Activated naive CD4-positive, alpha-beta T cell treated with anti-CD3 and anti-CD28 coated beads for 36 hours (primary cell): ENCODE measurements at regions of chr12 and their contacts with region 1.

Region 1: DNA sequence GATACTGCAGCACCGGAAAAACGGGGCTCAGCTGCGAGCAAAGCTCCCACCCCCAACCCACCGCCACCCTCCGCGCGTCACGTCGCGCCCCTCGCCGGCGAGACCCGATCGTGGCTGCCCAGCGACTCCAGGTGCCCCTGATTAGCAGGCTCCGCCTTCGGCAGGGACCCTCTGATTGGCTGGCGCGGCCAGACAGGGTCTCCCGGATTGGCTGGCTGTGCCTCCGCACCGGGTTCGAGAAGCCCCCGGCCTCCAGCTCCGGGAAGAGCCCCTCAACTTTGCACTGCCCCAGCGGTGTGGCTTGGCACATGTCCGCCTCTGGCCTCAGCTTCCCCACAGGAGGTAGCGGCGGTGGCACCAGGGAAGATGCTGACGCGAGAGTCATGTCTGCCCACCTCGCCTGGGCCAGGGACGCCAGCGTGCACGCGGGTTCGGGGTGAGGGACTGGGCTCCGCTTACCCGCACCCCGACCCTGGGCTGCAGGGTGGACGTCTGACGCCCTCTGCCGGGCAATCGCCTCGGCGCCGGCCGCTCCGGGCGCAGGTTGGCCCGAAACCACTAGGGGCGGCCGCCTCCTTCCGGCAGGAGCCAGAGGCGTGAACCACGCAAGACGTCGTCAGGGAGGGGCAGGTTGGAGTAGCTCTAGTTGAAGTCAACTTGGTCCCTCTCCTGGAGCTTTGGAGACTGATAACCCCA is 498 bp upstream of the RHOF start:
- DNase-seq: peak; percentile 97
- H3K4me3 Mint-ChIP-seq: peak overlapping the region; percentile 83
- H3K27ac Mint-ChIP-seq: peak overlapping the region; percentile 92
- H3K4me1 Mint-ChIP-seq: peaks cover 64% of the 10 kb centered on the region
- H3K27me3 Mint-ChIP-seq: no peaks in the 10 kb centered on the region

Region 2: GRCh38 chr12:121399391-121400331 is 394.3 kb before region 1 on chr12 and contains the start of gene RNF34:
- CTCF ChIA-PET with region 1: no interaction called
- intact Hi-C with region 1: loop called (anchors 5 kb)
- DNase-seq: peak; percentile 99
- H3K4me3 Mint-ChIP-seq: peak within 1 kb of the TSS; percentile 87
- H3K27ac Mint-ChIP-seq: peak within 1 kb of the TSS; percentile 93
- H3K4me1 Mint-ChIP-seq: peaks cover 32% of the 10 kb centered on the region
- H3K27me3 Mint-ChIP-seq: no peaks in the 10 kb centered on the region
- total RNA-seq, gene RNF34: 54.1 to 57.0 TPM

Region 3: DNA sequence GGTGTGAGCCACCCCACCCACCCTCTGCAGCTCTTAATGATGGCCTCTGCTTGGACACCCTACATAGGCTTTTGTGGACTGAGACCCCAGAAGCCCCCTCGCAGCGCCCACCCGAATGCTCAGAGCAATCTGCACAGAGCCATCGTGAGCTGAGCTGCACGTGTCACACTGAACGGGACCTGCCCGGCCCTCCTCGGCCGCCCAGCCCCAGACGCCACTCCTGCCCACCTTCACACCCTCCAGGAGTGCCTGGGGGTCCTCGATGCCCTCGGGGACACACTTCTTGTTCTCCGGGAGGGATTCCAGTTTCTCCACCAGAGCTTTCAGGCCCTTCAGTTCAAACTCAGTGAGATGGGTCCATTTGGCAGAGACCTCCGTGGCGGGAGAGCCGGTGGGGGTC is 284.6 kb before region 1 on chr12:
- CTCF ChIA-PET with region 1: no interaction called
- intact Hi-C with region 1: no loop called
- DNase-seq: no peak
- H3K4me3 Mint-ChIP-seq: no peak overlapping the region
- H3K27ac Mint-ChIP-seq: no peak overlapping the region
- H3K4me1 Mint-ChIP-seq: peaks cover under 1% of the 10 kb centered on the region
- H3K27me3 Mint-ChIP-seq: no peaks in the 10 kb centered on the region

Region 4: DNA sequence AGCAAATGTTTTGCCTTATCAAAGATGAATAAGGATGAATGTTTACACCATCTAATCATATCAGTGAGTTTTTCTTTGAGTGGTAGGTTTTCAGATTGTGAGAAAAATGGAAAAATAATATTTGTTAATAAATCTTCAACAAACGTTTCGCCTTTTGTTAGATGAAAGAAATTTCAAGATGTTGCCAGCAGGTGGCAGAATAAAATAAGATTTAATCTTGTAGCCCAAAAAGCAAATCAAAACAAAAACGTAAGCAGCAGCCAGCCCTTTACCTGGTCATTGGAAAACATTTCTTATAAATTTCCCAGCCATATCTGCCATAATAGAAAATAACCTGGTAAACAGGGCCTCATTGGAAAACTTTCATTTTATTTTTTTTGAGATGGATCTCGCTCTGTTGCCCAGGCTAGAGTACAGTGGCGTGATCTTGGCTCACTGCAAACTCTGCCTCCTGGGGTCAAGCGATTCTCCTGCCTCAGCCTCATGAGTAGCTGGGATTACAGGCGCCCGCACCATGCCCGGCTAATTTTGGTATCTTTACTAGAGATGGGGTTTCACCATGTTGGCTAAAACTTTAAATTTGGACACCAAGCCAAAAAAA is 96.8 kb before region 1 on chr12:
- CTCF ChIA-PET with region 1: interaction called, 119 read pairs
- intact Hi-C with region 1: loop called (anchors 1 kb)
- DNase-seq: peak; percentile 38
- H3K4me3 Mint-ChIP-seq: no peak overlapping the region
- H3K27ac Mint-ChIP-seq: no peak overlapping the region
- H3K4me1 Mint-ChIP-seq: peaks cover 2% of the 10 kb centered on the region
- H3K27me3 Mint-ChIP-seq: no peaks in the 10 kb centered on the region

Region 5: GRCh38 chr12:121811434-121812319 is 17.7 kb after region 1 on chr12:
- CTCF ChIA-PET with region 1: interaction called, 494 read pairs
- intact Hi-C with region 1: loop called (anchors 1 kb)
- DNase-seq: peak; percentile 67
- H3K4me3 Mint-ChIP-seq: peak overlapping the region; percentile 78
- H3K27ac Mint-ChIP-seq: peak overlapping the region; percentile 86
- H3K4me1 Mint-ChIP-seq: peaks cover 52% of the 10 kb centered on the region
- H3K27me3 Mint-ChIP-seq: no peaks in the 10 kb centered on the region

Region 6: DNA sequence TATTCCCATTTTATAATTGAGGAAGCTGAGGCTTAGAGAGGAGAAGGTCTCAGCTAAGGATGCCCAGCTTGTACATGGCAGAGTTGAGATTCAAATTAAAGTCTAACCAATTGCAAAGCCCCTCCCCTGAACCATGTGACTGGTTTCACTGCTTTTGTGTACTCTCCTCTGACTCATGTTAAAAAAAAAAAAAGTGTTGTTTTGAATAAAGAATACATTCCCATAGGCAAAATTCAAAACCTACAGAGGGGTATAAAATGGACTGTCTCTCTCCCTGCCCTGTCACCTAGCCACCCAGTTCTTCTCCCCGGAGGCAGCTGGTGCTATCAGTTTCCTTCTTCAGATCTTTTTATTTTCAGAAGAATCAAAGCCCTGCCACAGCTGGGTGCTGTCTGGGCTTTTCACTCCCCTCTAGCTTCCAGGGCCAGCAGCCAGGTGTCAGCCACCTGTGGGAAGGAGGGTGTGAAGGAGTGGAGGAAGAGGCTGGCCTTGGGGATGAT is 100.0 kb after region 1 on chr12:
- CTCF ChIA-PET with region 1: interaction called, 72 read pairs
- intact Hi-C with region 1: no loop called
- DNase-seq: peak; percentile 75
- H3K4me3 Mint-ChIP-seq: peak overlapping the region; percentile 1
- H3K27ac Mint-ChIP-seq: peak overlapping the region; percentile 83
- H3K4me1 Mint-ChIP-seq: peaks cover 42% of the 10 kb centered on the region
- H3K27me3 Mint-ChIP-seq: no peaks in the 10 kb centered on the region

Region 7: DNA sequence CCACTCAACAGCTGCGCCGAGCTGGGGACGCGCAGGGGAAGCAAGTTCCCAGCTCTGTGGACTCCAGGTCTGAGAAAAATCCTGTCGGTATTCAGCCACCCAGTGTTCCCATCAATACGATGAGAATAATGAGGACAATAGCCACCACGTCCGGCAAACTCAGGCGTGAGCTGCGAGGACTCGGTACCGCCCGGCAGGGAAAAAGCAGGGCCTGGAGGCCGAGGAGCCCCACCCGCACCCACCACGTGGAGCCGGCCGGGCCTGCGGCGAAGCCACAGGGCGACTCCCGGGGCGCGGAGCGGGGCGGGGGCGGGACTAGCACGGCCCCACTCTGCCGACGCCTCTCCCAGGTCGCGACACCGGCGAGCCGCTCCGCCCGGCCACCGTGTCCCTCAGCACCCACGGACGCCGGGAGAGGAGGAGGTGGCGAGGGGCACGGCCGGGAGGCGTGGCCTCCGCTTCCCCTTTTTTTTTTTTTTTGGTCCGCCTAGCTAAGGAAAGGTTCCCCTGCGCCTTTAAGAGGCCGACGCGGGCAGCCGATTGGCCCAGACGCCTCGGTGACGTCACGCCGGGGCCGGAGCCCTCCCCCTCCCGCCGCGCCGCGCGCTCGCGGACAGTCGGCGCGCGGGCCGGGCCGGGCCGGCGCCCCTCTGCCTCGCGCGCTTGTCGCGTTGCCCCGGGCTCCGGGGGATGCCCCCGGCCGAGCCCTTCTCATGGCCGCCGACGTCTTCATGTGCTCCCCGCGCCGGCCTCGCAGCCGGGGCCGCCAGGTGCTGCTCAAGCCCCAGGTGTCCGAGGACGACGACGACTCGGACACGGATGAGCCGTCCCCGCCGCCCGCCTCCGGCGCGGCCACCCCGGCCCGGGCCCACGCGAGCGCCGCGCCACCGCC is 284.4 kb after region 1 on chr12 and contains the start of gene MLXIP:
- CTCF ChIA-PET with region 1: interaction called, 3 read pairs
- intact Hi-C with region 1: loop called (anchors 5 kb)
- DNase-seq: peak; percentile 91
- H3K4me3 Mint-ChIP-seq: peak within 1 kb of the TSS; percentile 85
- H3K27ac Mint-ChIP-seq: peak within 1 kb of the TSS; percentile 51
- H3K4me1 Mint-ChIP-seq: peaks cover 47% of the 10 kb centered on the region
- H3K27me3 Mint-ChIP-seq: no peaks in the 10 kb centered on the region
- total RNA-seq, gene MLXIP: 18.8 to 22.0 TPM

Region 8: DNA sequence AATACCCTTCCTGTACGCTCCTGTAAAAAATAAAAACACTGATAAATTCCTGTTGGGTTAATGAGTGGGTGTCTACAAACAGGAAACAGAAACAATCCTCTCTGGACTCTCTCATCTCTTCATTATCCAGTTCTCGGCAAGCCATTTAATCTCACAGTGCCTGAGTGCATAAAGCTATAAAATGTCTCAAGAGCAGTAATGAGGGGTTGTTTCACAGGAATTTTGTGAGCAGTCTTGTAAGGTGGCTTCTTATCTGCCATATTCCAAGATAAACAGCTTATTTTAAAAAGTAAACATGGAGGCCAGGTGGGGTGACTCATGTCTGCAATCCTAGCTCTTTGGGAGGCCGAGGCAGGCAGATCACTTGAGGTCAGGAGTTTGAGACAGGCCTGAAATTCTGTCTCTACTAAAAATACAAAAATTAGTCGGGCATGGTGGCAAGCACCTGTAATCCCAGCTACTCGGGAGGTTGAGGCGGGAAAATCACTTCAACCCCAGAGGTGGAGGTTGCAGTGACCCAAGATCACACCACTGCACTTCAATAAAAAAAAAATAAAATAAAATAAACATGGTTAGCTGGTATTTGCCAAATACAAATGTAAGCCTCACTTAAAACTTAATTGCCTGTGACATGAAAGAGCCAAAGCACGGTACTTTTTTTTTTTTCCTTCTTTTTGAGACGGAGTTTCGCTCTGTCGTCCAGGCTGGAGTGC is 574.5 kb after region 1 on chr12:
- CTCF ChIA-PET with region 1: no interaction called
- intact Hi-C with region 1: no loop called
- DNase-seq: no peak
- H3K4me3 Mint-ChIP-seq: no peak overlapping the region
- H3K27ac Mint-ChIP-seq: no peak overlapping the region
- H3K4me1 Mint-ChIP-seq: peaks cover 26% of the 10 kb centered on the region
- H3K27me3 Mint-ChIP-seq: no peaks in the 10 kb centered on the region